ENCODE measurements at regions of chr9 and their contacts with region 1.

Region 1: GRCh38 chr9:96232539-96233241 is 69.3 kb downstream of the HSD17B3 start:
- DNase-seq: peak; percentile 69
- CTCF ChIP-seq: peak; percentile 72

Region 2: DNA sequence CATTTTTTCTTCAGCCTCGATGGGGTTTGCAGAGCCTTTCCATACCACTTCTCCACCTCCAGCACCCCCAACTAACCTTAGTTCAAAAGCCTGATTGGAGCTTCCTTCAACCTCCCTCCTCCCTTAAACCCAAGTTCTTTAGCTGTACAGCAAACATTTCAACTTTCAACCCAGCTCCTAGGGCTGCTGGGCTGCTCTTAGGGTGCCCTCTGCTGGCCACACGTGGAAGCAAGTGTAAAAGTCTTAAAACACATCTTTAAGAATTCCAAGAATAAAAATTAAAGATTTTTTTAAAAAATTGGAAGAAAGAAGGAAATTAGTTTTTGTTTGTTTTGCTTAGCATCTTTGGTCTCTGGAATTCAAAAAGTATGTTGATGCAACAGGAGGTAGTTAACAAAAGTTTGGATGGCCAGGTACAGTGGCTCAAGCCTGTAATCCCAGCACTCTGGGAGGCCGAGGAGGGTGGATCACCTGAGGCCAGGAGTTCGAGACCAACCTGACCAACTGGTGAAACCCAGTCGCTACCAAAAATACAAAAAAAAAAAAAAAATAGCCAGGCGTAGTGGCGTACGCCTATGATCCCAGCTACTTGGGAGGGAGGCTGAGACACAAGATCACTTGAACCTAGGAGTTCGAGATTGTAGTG is 84.8 kb after region 1 on chr9:
- in situ Hi-C with region 1: loop called (anchors 10 kb)
- DNase-seq: peak; percentile 65
- CTCF ChIP-seq: peak; percentile 71

Region 3: DNA sequence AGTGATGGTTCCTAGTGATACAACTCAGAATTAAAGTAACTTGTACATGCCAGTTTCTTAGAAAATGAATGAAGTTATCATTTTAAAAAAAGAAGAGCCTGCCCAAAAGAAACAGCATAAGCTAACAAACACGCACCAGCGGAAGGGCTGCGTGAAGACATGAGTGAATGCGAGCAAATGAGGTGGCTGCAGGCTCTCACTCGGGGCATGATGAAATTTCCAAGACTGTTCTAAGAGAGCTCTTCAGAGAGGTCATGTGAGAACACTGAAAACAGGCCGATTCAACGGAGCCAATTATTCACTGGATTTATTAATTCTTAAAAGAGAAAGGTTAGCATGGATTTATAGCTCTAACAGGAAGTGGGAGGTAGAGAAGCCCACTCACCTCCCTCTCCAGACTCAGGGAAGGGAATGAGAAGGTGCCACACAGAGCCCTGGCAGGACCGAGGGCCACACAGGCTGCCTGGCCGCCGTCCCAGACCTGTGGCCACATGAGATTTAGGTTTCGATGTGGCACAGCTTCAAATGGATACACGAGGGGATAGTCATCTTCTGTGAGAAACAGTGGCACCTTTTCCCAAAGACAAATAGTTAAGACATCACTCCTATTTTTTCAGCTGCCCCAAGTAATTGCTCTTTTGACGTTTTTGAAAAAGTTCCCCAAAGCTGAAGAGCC is 272.8 kb after region 1 on chr9:
- in situ Hi-C with region 1: no loop called
- DNase-seq: no peak
- CTCF ChIP-seq: no peak